HCT116 (cell line): ENCODE measurements at regions of chr7 and their contacts with region 1.

Region 1: GRCh38 chr7:29764227-29764626 is 42.1 kb upstream of the WIPF3 start:
- DNase-seq: no peak
- ATAC-seq: peak; percentile 90
- H3K4me3 ChIP-seq: no peak overlapping the region
- H3K27ac ChIP-seq: no peak overlapping the region
- H3K4me1 ChIP-seq: no peaks in the 10 kb centered on the region
- H3K27me3 ChIP-seq: no peaks in the 10 kb centered on the region
- CTCF ChIP-seq: peak; percentile 41 to 59 (median 55); a peak in 5 of 6 replicates
- POLR2A ChIP-seq: no peak
- RAD21 ChIP-seq: peak; percentile 62

Region 2: DNA sequence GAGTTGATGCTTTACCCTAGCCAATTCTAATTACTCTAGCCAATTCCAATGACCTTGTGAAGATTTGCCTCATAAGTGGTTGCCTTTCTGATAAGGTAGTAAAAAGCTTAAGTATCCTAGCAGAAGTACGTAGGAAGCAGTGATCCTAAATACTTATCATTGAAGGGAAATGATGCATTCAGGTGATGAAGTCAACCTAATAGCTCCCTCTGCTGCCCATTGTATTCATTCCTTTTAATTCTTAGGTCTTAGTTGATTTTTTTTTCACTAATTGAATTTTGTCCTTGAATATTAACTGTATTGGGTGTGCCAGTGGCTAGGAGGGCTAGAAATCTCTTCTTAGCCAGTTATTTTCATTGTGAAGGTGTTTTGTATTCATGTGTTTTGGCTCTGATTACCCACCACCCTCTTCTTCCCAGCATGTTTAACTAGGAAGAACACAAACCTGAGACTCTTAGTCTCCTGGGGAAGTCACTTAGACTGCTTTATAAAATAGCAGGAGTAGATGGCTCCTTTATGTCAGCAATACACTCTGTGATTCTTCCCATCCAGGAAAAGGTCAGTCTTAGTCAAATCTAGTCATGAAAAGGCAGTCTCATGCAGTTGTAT is 310.3 kb after region 1 on chr7:
- CTCF ChIA-PET with region 1: no interaction called
- POLR2A ChIA-PET with region 1: no interaction called
- RAD21 ChIA-PET with region 1: no interaction called
- intact Hi-C with region 1: loop called (anchors 5 kb)
- DNase-seq: peak; percentile 38
- ATAC-seq: peak; percentile 68
- H3K4me3 ChIP-seq: no peak overlapping the region
- H3K27ac ChIP-seq: no peak overlapping the region
- H3K4me1 ChIP-seq: no peaks in the 10 kb centered on the region
- H3K27me3 ChIP-seq: no peaks in the 10 kb centered on the region
- CTCF ChIP-seq: peak; percentile 45 to 68 (median 46); a peak in 5 of 6 replicates
- POLR2A ChIP-seq: no peak
- RAD21 ChIP-seq: peak; percentile 62

Region 3: DNA sequence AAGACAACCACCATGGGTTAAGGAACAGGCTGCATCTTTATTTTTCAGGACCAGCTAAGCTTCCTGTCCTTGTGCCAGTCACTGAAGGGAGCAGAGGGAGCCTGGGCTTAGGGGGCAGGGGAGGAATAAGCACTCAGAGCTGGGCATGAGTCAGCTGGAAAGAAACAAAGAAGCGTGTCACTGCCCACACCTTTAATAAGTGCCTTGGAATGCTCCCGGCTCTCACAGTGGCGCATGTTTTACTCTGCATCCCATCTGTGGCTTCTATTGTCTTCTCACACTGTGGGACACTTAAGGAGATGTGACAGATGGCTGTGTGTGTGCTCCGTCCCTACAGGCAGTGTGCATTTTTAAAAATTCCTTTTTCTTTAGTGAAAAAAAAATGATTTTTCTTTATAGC is 442.3 kb after region 1 on chr7:
- CTCF ChIA-PET with region 1: no interaction called
- POLR2A ChIA-PET with region 1: no interaction called
- RAD21 ChIA-PET with region 1: no interaction called
- intact Hi-C with region 1: no loop called
- DNase-seq: peak; percentile 63
- ATAC-seq: peak; percentile 92
- H3K4me3 ChIP-seq: 0 out of 4 replicates have a peak overlapping the region, but pooled peaks of 1 of the 2 experiments have one; percentile 3
- H3K27ac ChIP-seq: peak overlapping the region; percentile 19; the same call in 1 of the 2 replicates
- H3K4me1 ChIP-seq: peaks cover 13 to 17% of the 10 kb centered on the region in 2 experiments
- H3K27me3 ChIP-seq: no peaks in the 10 kb centered on the region
- CTCF ChIP-seq: no peak
- POLR2A ChIP-seq: no peak
- RAD21 ChIP-seq: no peak